ENCODE measurements at regions of chr17 and their contacts with region 1.

Region 1: GRCh38 chr17:59561042-59561441 is 4.4 kb upstream of the DHX40 start:
- DNase-seq: peak; percentile 65
- ATAC-seq: peak; percentile 66
- H3K4me3 ChIP-seq: no peak overlapping the region
- H3K27ac ChIP-seq: no peak overlapping the region
- H3K4me1 ChIP-seq: peaks cover 0 to 12% of the 10 kb centered on the region in 2 experiments; a peak in 2 of 4 replicates
- H3K27me3 ChIP-seq: no peaks in the 10 kb centered on the region
- CTCF ChIP-seq: peak; percentile 59 to 75 (median 65)
- POLR2A ChIP-seq: no peak
- RAD21 ChIP-seq: peak; percentile 45

Region 2: GRCh38 chr17:59311130-59311920 is 249.7 kb before region 1 on chr17:
- CTCF ChIA-PET with region 1: interaction called, 17 read pairs
- POLR2A ChIA-PET with region 1: no interaction called
- RAD21 ChIA-PET with region 1: interaction called in 1 of 2 experiments, 4 read pairs
- intact Hi-C with region 1: loop called (anchors 1 kb)
- DNase-seq: peak; percentile 78
- ATAC-seq: peak; percentile 93
- H3K4me3 ChIP-seq: no peak overlapping the region
- H3K27ac ChIP-seq: no peak overlapping the region
- H3K4me1 ChIP-seq: peaks cover 3 to 13% of the 10 kb centered on the region in 2 experiments; a peak in 3 of 4 replicates
- H3K27me3 ChIP-seq: no peaks in the 10 kb centered on the region
- CTCF ChIP-seq: peak; percentile 84 to 99 (median 97); a peak in 5 of 6 replicates
- POLR2A ChIP-seq: no peak
- RAD21 ChIP-seq: peak; percentile 98

Region 3: GRCh38 chr17:59329638-59330313 is 231.3 kb before region 1 on chr17:
- CTCF ChIA-PET with region 1: interaction called, 4 read pairs
- POLR2A ChIA-PET with region 1: no interaction called
- RAD21 ChIA-PET with region 1: no interaction called
- intact Hi-C with region 1: loop called (anchors 5 kb)
- DNase-seq: peak; percentile 62
- ATAC-seq: peak; percentile 65
- H3K4me3 ChIP-seq: no peak overlapping the region
- H3K27ac ChIP-seq: no peak overlapping the region
- H3K4me1 ChIP-seq: peaks cover 14 to 27% of the 10 kb centered on the region in 2 experiments
- H3K27me3 ChIP-seq: peaks cover 26% of the 10 kb centered on the region
- CTCF ChIP-seq: peak; percentile 65 to 90 (median 87); a peak in 5 of 6 replicates
- POLR2A ChIP-seq: no peak
- RAD21 ChIP-seq: peak; percentile 84

Region 4: DNA sequence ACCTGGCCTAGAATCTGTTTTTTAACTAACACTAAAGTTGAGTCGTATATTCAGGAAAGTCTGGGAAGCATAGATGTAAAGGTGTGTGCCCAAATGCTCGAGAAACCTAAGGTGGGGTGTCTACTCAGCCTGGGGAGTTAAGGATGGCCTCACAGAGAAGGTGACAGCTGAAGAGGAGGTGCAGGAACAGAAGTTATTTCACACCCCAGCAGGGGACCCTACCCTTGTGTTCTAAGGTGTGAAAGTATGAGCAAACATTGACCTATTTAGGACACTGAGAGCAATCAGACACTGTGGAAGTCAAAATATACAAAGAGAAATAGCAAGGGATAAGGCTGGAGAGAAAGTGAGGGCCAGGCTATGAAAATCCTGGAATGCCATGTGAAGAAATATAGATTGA is 44.6 kb before region 1 on chr17:
- CTCF ChIA-PET with region 1: interaction called, 7 read pairs
- POLR2A ChIA-PET with region 1: no interaction called
- RAD21 ChIA-PET with region 1: no interaction called
- intact Hi-C with region 1: loop called (anchors 1 kb)
- DNase-seq: no peak
- ATAC-seq: no peak
- H3K4me3 ChIP-seq: no peak overlapping the region
- H3K27ac ChIP-seq: no peak overlapping the region
- H3K4me1 ChIP-seq: peaks cover 0 to 6% of the 10 kb centered on the region in 2 experiments; a peak in 2 of 4 replicates
- H3K27me3 ChIP-seq: no peaks in the 10 kb centered on the region
- CTCF ChIP-seq: no peak
- POLR2A ChIP-seq: no peak
- RAD21 ChIP-seq: no peak

Region 5: GRCh38 chr17:59521204-59522126 is 39.6 kb before region 1 on chr17:
- CTCF ChIA-PET with region 1: interaction called, 7 read pairs
- POLR2A ChIA-PET with region 1: no interaction called
- RAD21 ChIA-PET with region 1: no interaction called
- intact Hi-C with region 1: loop called (anchors 1 kb)
- DNase-seq: peak; percentile 49
- ATAC-seq: peak; percentile 98
- H3K4me3 ChIP-seq: no peak overlapping the region
- H3K27ac ChIP-seq: no peak overlapping the region
- H3K4me1 ChIP-seq: peaks cover 0 to 10% of the 10 kb centered on the region in 2 experiments; a peak in 2 of 4 replicates
- H3K27me3 ChIP-seq: no peaks in the 10 kb centered on the region
- CTCF ChIP-seq: peak; percentile 82 to 98 (median 96)
- POLR2A ChIP-seq: no peak
- RAD21 ChIP-seq: peak; percentile 92

Measured in HCT116 (cell line).